Left ventricle myocardium inferior (tissue), 1 donor: ENCODE measurements at regions of chr14 and their contacts with region 1.

Region 1: DNA sequence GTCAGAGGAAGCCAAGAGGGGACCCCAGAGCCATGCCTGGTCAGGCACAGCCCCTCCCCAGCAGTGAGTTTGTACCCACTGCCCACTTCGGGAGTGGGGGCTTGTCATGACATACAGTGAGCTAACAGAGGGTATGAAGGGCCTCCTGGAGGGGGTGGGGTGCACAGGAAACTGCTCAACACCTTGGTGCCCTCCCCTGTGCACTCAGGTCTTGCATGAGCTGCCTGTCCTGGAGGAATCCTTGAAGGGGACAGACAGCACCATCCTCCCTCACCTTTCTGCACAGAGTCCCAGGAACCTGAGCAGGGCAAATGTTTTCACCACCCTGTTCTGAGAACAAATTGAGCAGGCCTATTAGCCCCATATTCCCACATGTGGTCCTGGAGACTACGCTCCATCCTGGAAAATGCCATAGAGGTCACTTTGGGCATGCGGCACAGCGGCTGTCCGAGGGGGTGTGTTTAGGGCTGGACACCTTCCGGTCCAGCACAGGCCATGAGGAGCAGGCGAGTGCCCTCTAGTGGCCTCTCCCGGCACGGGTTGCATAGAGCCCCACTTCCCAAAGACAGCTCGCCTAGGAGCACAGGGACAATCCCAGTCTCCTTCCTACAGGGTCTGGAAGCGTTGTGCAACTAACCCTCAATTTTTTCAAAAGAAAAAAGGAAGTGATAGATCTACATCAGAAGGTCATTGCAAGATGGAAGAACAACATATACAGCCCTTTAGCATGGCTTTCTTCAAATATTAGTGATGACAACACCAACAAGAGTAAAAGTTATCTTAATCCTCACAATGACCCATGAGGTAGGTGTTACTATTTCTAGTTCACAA is 31.9 kb upstream of the ZFP36L1 start:
- DNase-seq: peak; percentile 89
- H3K4me3 ChIP-seq: peak overlapping the region; percentile 8
- H3K27ac ChIP-seq: no peak overlapping the region
- H3K4me1 ChIP-seq: peaks cover 5% of the 10 kb centered on the region
- H3K27me3 ChIP-seq: no peaks in the 10 kb centered on the region
- CTCF ChIP-seq: peak; percentile 95

Region 2: DNA sequence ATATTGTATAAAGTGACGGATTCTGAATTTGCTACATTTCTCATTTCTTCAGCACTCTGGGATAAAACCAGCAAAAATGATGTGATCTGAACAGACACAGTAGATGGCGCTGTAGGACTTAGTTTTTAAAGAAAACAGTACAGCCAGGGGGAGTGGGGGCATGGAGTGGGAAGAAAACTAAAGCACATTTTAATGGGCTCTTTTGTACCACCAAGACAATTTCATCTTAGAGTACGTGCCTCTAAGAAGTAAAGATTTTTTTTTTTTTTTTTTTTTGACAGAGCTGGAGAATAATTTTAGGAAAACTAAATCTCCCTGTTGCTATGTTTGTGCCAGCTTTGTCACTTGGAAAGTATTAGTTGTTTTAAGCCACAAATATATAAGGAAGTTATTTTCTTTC is 880.8 kb before region 1 on chr14:
- intact Hi-C with region 1: loop called (anchors 5 kb)
- DNase-seq: peak; percentile 18
- H3K4me3 ChIP-seq: no peak overlapping the region
- H3K27ac ChIP-seq: peak overlapping the region; percentile 10
- H3K4me1 ChIP-seq: peaks cover 34% of the 10 kb centered on the region
- H3K27me3 ChIP-seq: no peaks in the 10 kb centered on the region
- CTCF ChIP-seq: peak; percentile 81